ENCODE measurements at regions of chrX and their contacts with region 1.

Region 1: GRCh38 chrX:139559383-139560042 is 29.0 kb downstream of the F9 start:
- DNase-seq: no peak
- H3K4me3 ChIP-seq: no peak overlapping the region
- H3K27ac ChIP-seq: no peak overlapping the region
- H3K4me1 ChIP-seq: no peaks in the 10 kb centered on the region
- H3K27me3 ChIP-seq: no peaks in the 10 kb centered on the region
- CTCF ChIP-seq: peak in 2 of 3 experiments; percentile 46 to 58; a peak in 3 of 4 replicates
- EP300 ChIP-seq: no peak
- POLR2A ChIP-seq: no peak
- RAD21 ChIP-seq: peak; percentile 71 to 80

Region 2: GRCh38 chrX:139126493-139126892 is 433.0 kb before region 1 on chrX:
- CTCF ChIA-PET with region 1: interaction called, 16 read pairs
- POLR2A ChIA-PET with region 1: no interaction called
- DNase-seq: peak; percentile 13 to 46
- H3K4me3 ChIP-seq: no peak overlapping the region
- H3K27ac ChIP-seq: no peak overlapping the region
- H3K4me1 ChIP-seq: no peaks in the 10 kb centered on the region
- H3K27me3 ChIP-seq: no peaks in the 10 kb centered on the region
- CTCF ChIP-seq: peak; percentile 41 to 98 (median 76)
- EP300 ChIP-seq: no peak
- POLR2A ChIP-seq: no peak
- RAD21 ChIP-seq: peak; percentile 81 to 88

Region 3: DNA sequence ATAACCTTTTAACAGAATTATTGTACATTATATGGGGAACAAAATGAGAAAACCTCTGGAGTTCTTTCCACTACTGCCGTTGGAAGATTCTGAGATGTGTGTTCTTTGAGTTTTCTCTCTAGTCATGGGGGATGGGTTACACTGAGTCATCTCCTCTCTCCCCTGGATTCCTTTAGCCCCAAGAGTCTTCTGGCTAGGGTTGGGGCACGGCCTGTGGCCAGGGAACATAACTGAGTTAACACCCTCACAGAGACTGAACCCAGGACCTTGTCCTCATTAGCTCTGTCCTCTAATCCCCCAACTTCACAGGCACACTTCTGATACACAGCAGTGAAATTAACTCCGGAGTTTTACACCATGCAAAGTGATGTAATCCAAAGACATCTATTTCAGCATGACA is 171.3 kb before region 1 on chrX:
- CTCF ChIA-PET with region 1: no interaction called
- POLR2A ChIA-PET with region 1: no interaction called
- DNase-seq: no peak
- H3K4me3 ChIP-seq: no peak overlapping the region
- H3K27ac ChIP-seq: no peak overlapping the region
- H3K4me1 ChIP-seq: no peaks in the 10 kb centered on the region; a peak in 1 of 7 replicates
- H3K27me3 ChIP-seq: no peaks in the 10 kb centered on the region
- CTCF ChIP-seq: no peak
- EP300 ChIP-seq: no peak
- POLR2A ChIP-seq: no peak
- RAD21 ChIP-seq: no peak

Measured in H1 (cell line).